H1 (cell line): ENCODE measurements at regions of chr4 and their contacts with region 1.

Region 1: GRCh38 chr4:6673660-6674499 is 19.8 kb upstream of the S100P start:
- DNase-seq: peak; percentile 92 to 93
- H3K4me3 ChIP-seq: peak overlapping the region; percentile 71 to 79 (median 76)
- H3K27ac ChIP-seq: no peak overlapping the region; the same call in 1 of the 2 replicates
- H3K4me1 ChIP-seq: peaks cover 3 to 9% (median 6%) of the 10 kb centered on the region in 4 experiments; a peak in 4 of 7 replicates
- H3K27me3 ChIP-seq: no peaks in the 10 kb centered on the region; a peak in 2 of 7 replicates
- CTCF ChIP-seq: no peak
- EP300 ChIP-seq: no peak
- POLR2A ChIP-seq: peak in 1 of 2 experiments; percentile 57; a peak in 2 of 3 replicates
- RAD21 ChIP-seq: no peak

Region 2: DNA sequence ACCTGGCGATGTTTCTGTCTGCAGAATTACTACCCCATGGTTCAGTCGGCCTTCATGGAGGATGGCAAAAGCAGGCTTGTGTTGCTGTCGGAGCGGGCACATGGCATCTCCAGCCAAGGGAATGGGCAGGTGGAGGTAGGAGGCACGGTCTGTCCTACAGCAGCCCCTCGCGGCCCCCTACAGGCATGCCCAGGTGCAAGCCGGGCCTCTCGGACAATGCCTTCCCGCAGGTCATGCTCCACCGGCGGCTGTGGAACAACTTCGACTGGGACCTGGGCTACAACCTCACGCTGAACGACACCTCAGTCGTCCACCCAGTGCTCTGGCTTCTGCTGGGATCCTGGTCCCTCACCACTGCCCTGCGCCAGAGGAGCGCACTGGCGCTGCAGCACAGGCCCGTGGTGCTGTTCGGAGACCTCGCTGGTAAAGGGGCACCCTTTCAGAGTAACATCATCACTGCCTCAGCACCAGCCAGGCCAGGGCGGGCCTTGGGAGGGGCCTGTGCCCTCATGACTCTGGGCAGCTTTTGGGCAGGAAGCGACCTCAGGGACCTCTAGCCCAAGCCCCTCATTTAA is 62.9 kb before region 1 on chr4:
- CTCF ChIA-PET with region 1: no interaction called
- POLR2A ChIA-PET with region 1: no interaction called
- DNase-seq: no peak
- H3K4me3 ChIP-seq: no peak overlapping the region
- H3K27ac ChIP-seq: no peak overlapping the region
- H3K4me1 ChIP-seq: no peaks in the 10 kb centered on the region; a peak in 1 of 7 replicates
- H3K27me3 ChIP-seq: no peaks in the 10 kb centered on the region
- CTCF ChIP-seq: no peak
- EP300 ChIP-seq: no peak
- POLR2A ChIP-seq: no peak
- RAD21 ChIP-seq: no peak

Region 3: DNA sequence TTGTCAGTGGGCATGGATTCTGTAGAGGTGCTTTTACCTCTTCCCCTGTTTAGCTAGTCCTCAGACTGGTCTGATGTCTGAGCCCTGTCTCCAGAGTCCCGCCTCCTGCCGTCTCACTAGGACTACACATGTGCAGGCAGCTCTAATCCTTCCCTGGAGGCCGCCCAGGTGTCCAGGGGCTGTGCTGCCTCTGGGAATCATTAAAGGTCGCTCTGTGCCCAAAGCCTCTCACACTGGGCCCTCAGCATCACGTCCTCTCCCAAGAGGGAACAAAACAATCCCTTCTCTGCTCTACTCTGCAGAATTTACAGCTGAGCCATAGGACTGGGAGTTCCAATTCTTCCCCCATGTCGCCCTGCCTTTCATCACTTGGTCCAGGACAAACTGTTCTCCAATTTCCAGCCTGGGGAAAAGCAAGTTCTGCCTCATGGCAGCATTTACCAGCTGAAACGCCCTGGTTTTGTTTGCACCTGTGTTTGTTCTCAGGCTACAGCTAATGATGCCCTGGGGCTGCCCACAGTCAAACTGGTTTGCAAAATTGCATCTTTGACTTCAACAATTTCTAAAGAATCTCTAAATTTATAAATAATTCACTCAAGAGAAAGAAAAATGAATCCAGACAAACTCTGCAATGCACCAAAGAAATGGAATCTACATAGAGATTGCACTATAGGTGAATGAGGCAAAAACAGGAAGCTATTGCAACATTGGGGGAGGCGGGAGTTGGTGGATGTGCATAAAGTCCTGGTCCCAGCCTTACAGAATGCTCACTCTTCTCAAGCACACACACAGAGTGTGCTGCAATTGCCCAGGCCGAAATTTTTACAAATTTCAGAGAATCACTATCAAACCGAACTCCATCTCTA is 40.6 kb before region 1 on chr4:
- CTCF ChIA-PET with region 1: no interaction called
- POLR2A ChIA-PET with region 1: interaction called, 10 read pairs
- DNase-seq: no peak
- H3K4me3 ChIP-seq: no peak overlapping the region
- H3K27ac ChIP-seq: no peak overlapping the region
- H3K4me1 ChIP-seq: no peaks in the 10 kb centered on the region; a peak in 1 of 7 replicates
- H3K27me3 ChIP-seq: no peaks in the 10 kb centered on the region
- CTCF ChIP-seq: no peak
- EP300 ChIP-seq: no peak
- POLR2A ChIP-seq: no peak
- RAD21 ChIP-seq: no peak

Region 4: DNA sequence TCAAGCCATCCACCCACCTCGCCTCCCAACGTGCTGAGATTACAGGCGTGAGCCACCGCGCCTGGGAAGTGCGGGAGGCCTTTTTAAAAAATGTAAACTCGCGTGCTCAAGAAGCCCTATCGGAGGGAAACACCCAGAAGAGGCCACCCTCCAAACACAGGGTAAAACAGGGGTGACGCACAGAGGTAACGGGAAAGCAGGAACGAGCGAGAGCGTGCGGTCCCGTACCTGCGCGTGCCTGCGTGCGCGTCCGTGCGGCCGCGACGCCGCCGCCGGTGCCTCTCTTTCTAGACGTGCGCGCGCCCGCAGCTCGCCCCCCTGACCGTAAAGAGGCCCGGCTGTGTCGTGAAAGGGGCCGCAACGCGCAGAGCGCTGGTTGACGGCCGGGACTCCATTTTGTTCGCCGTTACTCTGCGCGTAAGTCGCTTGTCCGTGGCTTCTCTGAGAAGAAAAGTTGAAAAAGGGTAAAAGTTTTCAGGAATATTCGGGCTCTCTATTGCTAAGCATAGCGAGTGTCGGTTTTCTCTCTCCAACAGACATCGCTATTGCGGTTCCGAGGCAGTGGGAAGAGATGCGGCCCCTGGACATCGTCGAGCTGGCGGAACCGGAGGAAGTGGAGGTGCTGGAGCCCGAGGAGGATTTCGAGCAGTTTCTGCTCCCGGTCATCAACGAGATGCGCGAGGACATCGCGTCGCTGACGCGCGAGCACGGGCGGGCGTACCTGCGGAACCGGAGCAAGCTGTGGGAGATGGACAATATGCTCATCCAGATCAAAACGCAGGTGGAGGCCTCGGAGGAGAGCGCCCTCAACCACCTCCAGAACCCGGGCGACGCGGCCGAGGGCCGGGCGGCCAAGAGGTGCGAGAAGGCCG is 33.4 kb before region 1 on chr4 and contains the start of gene MRFAP1:
- CTCF ChIA-PET with region 1: interaction called, 3 read pairs
- POLR2A ChIA-PET with region 1: interaction called, 36 read pairs
- DNase-seq: peak; percentile 80 to 89
- H3K4me3 ChIP-seq: peak within 1 kb of the TSS; percentile 73 to 100 (median 96)
- H3K27ac ChIP-seq: peak within 1 kb of the TSS; percentile 82
- H3K4me1 ChIP-seq: peaks cover 0 to 9% (median 0%) of the 10 kb centered on the region in 4 experiments; a peak in 3 of 7 replicates
- H3K27me3 ChIP-seq: no peaks in the 10 kb centered on the region
- CTCF ChIP-seq: no peak
- EP300 ChIP-seq: no peak
- POLR2A ChIP-seq: peak; percentile 74 to 84
- RAD21 ChIP-seq: no peak
- total RNA-seq, gene MRFAP1: 307 and 313 TPM in 2 replicates

Region 5: GRCh38 chr4:6663596-6664393 is 10.1 kb before region 1 on chr4:
- CTCF ChIA-PET with region 1: interaction called, 16 read pairs
- POLR2A ChIA-PET with region 1: interaction called, 33 read pairs
- DNase-seq: no peak
- H3K4me3 ChIP-seq: 0 out of 8 replicates have a peak overlapping the region, but pooled peaks of 1 of the 4 experiments have one; percentile 6
- H3K27ac ChIP-seq: no peak overlapping the region
- H3K4me1 ChIP-seq: no peaks in the 10 kb centered on the region; a peak in 1 of 7 replicates
- H3K27me3 ChIP-seq: peaks cover 0 to 15% (median 11%) of the 10 kb centered on the region in 4 experiments; a peak in 5 of 7 replicates
- CTCF ChIP-seq: no peak
- EP300 ChIP-seq: no peak
- POLR2A ChIP-seq: no peak
- RAD21 ChIP-seq: no peak

Region 6: DNA sequence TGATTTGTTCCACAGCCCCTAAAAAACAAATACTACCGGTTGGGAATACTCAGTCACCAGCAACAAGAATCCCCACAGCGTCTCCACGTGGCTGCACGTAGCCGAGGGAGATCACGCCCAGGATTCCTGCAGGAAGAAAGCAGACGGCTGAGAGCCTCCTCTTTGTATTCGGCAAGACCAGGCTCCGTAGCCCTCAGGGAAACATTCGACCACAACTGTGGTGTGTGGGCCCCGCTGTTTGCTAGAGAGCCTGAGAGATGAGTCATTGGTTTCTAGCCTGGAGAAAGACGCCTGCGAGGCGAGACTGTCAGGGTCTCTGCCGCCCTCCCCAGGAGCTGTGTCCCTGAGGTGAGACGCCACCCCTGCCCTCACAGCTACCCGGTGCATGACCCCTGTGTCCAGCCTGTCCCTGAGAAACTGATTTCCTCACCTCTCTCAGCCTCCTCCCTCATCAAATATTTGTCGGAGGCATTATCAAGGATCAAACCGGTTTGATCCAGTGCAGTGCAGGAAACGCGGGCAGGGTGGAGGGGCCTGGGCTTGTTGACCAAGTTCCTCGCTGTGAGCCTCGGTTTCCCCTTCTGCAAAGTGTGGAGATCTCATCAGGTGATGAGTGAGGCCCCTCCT is 15.1 kb after region 1 on chr4:
- CTCF ChIA-PET with region 1: interaction called, 37 read pairs
- POLR2A ChIA-PET with region 1: interaction called, 20 read pairs
- DNase-seq: peak in 1 of 2 experiments; percentile 55
- H3K4me3 ChIP-seq: no peak overlapping the region
- H3K27ac ChIP-seq: 0 out of 2 replicates have a peak overlapping the region, but pooled peaks have one; percentile 10
- H3K4me1 ChIP-seq: peaks cover 0 to 20% (median 16%) of the 10 kb centered on the region in 4 experiments; a peak in 6 of 7 replicates
- H3K27me3 ChIP-seq: 0 out of 7 replicates have a peak, but pooled peaks cover 0 to 2% (median 0%) of the 10 kb centered on the region in 4 experiments
- CTCF ChIP-seq: no peak
- EP300 ChIP-seq: no peak
- POLR2A ChIP-seq: no peak
- RAD21 ChIP-seq: no peak

Region 7: GRCh38 chr4:6701371-6701770 is 27.5 kb after region 1 on chr4:
- CTCF ChIA-PET with region 1: interaction called, 11 read pairs
- POLR2A ChIA-PET with region 1: interaction called, 5 read pairs
- DNase-seq: peak; percentile 73 to 95
- H3K4me3 ChIP-seq: no peak overlapping the region
- H3K27ac ChIP-seq: no peak overlapping the region
- H3K4me1 ChIP-seq: no peaks in the 10 kb centered on the region; a peak in 1 of 7 replicates
- H3K27me3 ChIP-seq: no peaks in the 10 kb centered on the region
- CTCF ChIP-seq: peak; percentile 82 to 94 (median 85)
- EP300 ChIP-seq: no peak
- POLR2A ChIP-seq: no peak
- RAD21 ChIP-seq: peak; percentile 62 to 72

Region 8: GRCh38 chr4:6848717-6849305 is 174.9 kb after region 1 on chr4:
- CTCF ChIA-PET with region 1: no interaction called
- POLR2A ChIA-PET with region 1: no interaction called
- DNase-seq: no peak
- H3K4me3 ChIP-seq: no peak overlapping the region; a peak in 1 of 8 replicates
- H3K27ac ChIP-seq: no peak overlapping the region
- H3K4me1 ChIP-seq: peaks cover 5 to 24% (median 17%) of the 10 kb centered on the region in 4 experiments; a peak in 6 of 7 replicates
- H3K27me3 ChIP-seq: no peaks in the 10 kb centered on the region
- CTCF ChIP-seq: no peak
- EP300 ChIP-seq: no peak
- POLR2A ChIP-seq: no peak
- RAD21 ChIP-seq: no peak